Ascending aorta (tissue), 2 donors: ENCODE measurements at regions of chr15 and their contacts with region 1.

Region 1: DNA sequence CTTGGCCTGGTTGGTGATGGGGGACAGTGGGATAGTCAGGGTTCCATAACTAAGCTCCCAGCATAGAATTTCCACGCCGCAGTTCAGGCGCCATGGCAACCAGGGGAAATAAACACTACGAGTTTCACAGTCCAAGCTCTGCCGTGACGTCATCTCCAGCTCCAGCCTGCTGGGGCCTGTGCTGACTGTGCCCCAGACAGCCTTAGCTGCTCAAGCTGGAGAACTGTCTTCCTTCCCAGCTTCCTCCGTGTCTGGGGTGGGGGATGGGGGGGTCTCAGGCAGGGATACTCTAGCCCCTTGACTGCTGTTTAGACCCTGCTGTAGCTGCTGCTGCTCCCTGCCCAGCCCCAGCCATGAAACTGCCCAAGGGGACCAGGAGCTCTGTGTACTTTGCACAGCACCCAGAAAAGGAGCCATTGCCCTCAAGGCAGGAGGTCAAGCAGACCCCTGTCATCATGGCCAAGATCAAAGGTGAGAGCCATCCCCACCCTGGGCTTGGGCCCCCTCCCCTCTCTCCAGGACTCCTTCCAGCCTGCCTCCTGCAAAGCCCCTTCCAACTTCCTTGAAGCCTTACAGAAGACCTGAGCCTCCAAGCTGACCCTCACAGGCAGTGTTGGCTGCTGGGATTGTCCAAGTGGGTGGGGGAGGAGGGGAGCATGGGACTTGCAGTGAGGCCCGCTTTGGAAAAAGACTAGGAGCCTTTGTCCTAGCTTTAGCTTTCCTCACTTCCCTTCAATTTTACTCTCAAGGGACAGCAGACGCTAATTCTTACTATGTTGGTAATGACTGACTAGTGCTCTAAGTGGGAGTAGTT is 11.4 kb upstream of the CSPG4 start:
- DNase-seq: peak; percentile 72 to 97
- H3K4me3 ChIP-seq: no peak overlapping the region
- H3K27ac ChIP-seq: peak overlapping the region; percentile 61 to 85
- H3K4me1 ChIP-seq: peaks cover 4 to 5% of the 10 kb centered on the region in 2 donors
- H3K27me3 ChIP-seq: no peaks in the 10 kb centered on the region
- CTCF ChIP-seq: no peak

Region 2: DNA sequence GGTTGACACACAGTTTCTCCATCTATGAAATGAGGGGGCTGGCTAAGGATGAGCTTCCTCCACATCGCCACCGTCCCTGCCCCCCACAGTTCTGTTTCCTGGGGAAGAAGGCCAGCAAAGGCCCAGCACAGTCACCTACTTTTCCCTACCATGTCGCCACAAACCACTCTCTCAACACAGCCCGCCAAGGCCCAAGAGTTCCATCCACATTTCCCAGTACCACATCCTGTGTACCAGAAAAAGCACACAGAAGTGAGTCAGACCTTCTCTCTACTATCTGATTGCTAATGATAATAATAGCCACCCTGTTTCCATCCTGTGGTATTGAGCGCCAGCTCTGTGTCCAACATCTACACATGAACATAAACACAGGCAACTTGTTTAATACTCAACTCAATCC is 552.6 kb before region 1 on chr15:
- intact Hi-C with region 1: no loop called
- DNase-seq: no peak
- H3K4me3 ChIP-seq: no peak overlapping the region
- H3K27ac ChIP-seq: no peak overlapping the region
- H3K4me1 ChIP-seq: peaks cover 3 to 12% of the 10 kb centered on the region in 2 donors
- H3K27me3 ChIP-seq: no peaks in the 10 kb centered on the region
- CTCF ChIP-seq: no peak

Region 3: DNA sequence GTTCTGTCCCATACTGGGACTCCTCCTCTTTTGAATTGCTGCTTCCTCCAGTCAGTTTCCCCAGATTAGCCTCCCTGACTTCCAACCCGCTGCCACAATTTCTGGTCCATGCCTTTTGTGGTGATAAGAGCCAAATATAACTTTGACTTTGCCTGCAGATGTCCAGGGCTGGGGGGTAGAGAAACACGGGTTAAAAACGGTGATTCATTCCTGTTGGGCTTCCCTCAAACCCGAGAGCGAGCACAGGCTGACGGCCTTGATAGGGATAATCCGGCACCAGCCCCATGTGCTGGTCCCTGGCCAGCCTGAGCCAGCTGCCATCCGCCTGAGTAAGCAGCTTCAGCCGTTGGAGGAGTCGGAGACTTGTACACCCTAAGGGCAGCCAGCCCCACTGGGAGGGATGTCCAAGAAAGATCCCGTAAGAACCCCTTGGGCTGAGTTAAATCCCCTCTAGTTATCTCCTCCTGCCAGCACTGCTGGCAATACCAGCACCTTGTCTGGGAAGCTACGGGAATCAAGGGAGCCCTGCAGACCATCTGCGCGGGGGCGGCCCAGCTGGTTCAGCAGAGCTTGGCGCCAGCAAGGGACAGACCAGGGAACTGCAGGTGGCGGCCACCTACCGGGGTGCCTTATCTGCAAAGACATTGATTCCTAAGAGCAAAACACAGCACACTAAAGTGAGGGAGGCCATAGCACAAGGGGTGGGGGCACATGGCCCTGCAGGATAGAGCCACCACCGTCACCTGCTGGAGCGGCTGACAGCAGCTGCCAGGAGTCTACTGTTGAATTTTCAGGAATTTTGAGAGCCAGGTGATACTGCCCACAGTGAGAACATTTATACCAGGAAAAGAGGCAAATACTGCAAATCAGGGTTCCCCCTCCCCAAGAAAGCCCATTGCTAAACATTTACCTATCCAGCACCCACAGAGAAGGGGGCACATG is 29.5 kb before region 1 on chr15:
- intact Hi-C with region 1: loop called (anchors 2 kb)
- DNase-seq: peak; percentile 69 to 95
- H3K4me3 ChIP-seq: peak overlapping the region in 1 of 2 donors; percentile 1
- H3K27ac ChIP-seq: peak overlapping the region; percentile 94 to 97
- H3K4me1 ChIP-seq: peaks cover 45 to 61% of the 10 kb centered on the region in 2 donors
- H3K27me3 ChIP-seq: no peaks in the 10 kb centered on the region
- CTCF ChIP-seq: peak; percentile 50 to 71 (median 62)

Region 4: DNA sequence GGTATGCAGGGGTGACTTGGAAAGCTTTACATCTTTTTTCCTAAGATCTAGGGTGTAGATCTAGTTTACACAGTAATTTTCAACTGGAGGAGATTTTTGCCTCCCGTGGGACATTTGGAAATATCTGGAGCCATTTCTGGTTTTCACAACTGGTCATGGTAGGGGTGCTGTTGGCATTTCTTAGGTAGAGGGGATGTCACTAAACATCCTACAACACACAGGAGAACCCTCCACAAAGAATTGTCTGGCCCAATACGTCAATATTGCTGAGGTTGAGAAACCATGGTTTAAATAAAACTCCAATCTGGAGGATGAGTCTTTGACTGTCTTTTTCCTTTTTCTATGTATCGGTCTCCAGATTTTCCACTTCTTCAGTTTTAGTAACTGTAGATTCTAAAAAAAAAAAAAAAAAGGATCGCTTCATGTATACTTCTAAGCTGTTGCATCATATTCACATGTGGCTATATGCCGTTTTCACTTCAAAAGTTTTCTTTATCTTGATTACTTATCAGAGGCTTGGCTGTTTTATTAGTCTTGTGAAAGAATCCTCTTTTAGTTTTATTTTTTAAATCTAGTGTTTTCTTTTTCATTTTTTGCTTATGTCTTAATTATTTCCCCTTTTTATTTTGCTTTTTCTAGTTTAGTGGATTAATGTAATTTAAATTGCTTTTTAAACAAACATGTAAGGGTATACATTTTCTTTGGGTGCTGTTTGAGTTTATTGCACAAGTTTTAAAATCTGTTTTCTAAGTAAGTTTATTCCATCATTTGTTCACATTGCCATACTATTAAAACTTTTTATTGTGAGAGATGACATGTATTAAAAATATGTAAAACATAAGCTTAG is 140.4 kb after region 1 on chr15:
- intact Hi-C with region 1: no loop called
- DNase-seq: no peak
- H3K4me3 ChIP-seq: no peak overlapping the region
- H3K27ac ChIP-seq: no peak overlapping the region
- H3K4me1 ChIP-seq: peaks cover 0 to 3% of the 10 kb centered on the region in 2 donors
- H3K27me3 ChIP-seq: no peaks in the 10 kb centered on the region
- CTCF ChIP-seq: no peak

Region 5: GRCh38 chr15:76034111-76034510 is 310.1 kb after region 1 on chr15:
- intact Hi-C with region 1: no loop called
- DNase-seq: no peak
- H3K4me3 ChIP-seq: no peak overlapping the region
- H3K27ac ChIP-seq: no peak overlapping the region
- H3K4me1 ChIP-seq: no peaks in the 10 kb centered on the region
- H3K27me3 ChIP-seq: no peaks in the 10 kb centered on the region
- CTCF ChIP-seq: no peak